ENCODE measurements at regions of chr17 and their contacts with region 1.

Region 1: DNA sequence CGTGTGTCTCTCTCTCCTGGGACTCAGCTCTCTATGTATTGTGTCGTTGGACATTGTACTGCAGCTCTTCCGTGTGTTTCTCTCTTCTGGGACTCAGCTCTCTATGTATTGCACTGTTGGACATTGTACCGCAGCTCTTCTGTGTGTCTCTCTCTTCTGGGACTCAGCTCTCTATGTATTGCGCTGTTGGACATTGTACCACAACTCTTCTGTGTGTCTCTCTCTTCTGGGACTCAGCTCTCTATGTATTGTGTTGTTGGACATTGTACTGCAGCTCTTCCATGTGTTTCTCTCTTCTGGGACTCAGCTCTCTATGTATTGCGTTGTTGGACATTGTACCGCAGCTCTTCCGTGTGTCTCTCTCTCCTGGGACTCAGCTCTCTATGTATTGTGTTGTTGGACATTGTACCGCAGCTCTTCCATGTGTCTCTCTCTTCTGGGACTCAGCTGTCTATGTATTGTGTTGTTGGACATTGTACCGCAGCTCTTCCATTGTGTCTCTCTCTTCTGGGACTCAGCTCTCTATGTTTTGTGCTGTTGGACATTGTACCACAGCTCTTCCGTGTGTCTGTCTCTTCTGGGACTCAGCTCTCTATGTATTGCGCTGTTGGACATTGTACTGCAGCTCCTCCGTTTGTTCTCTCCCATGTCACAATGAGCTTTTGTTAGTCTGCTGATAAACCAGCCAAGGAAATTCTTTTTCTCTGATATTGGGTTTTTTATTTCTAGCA is 84.8 kb downstream of the RPTOR start:
- DNase-seq: no peak
- H3K4me3 ChIP-seq: no peak overlapping the region
- H3K27ac ChIP-seq: no peak overlapping the region
- H3K4me1 ChIP-seq: no peaks in the 10 kb centered on the region
- H3K27me3 ChIP-seq: no peaks in the 10 kb centered on the region
- CTCF ChIP-seq: no peak
- POLR2A ChIP-seq: no peak

Region 2: GRCh38 chr17:80640366-80641084 is 11.1 kb after region 1 on chr17:
- CTCF ChIA-PET with region 1: interaction called, 11 read pairs
- POLR2A ChIA-PET with region 1: no interaction called
- dilution Hi-C with region 1: no loop called
- intact Hi-C with region 1: no loop called
- DNase-seq: no peak
- H3K4me3 ChIP-seq: no peak overlapping the region
- H3K27ac ChIP-seq: no peak overlapping the region
- H3K4me1 ChIP-seq: no peaks in the 10 kb centered on the region
- H3K27me3 ChIP-seq: no peaks in the 10 kb centered on the region
- CTCF ChIP-seq: no peak
- POLR2A ChIP-seq: no peak

Region 3: DNA sequence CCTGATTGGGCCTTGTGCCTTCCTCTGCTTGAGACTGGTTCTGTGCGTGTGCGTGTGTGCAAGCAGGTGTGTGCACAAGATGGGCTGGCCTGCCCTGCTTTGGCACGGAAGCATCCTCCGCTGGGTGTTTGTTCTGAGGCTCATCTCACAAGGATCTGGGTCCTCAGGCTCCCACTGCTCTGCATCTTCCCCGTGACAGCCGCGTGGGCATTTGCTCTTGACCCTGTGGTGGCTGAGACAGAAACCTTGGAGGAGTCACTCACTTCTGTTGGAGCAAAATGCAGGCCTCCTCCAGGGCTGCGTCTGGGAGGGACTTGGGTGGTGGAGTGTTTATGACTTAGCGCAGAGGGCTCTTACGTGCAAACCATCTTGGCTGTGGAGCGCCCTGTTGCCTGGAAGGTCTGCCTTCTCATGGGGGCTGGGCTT is 34.3 kb after region 1 on chr17:
- CTCF ChIA-PET with region 1: no interaction called
- POLR2A ChIA-PET with region 1: no interaction called
- dilution Hi-C with region 1: no loop called
- intact Hi-C with region 1: no loop called
- DNase-seq: no peak
- H3K4me3 ChIP-seq: no peak overlapping the region
- H3K27ac ChIP-seq: no peak overlapping the region
- H3K4me1 ChIP-seq: no peaks in the 10 kb centered on the region
- H3K27me3 ChIP-seq: no peaks in the 10 kb centered on the region
- CTCF ChIP-seq: no peak
- POLR2A ChIP-seq: no peak